ENCODE measurements at regions of chr2 and their contacts with region 1.

Region 1: DNA sequence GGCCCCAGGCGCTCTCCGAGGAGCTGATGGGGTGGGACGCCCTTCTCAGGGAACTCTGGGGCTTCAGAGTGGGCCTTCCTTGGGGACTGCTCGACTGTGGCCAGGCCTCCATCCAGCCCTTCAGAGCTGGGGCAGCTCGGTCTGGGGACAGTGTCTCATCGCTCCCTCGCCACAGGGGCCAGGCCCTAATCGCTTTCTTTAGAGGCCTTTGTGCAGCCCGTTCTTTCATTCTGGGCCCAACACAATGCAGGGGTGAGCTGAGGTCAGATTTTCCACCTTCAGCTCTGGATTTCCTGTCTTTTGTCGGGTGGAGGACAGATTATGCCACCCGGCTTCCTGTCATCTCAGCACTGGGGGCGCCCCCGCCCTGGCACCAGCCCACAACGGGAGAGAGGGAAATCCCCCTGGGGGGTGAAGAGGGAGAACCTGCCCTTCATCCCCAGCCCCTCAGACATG is 25.2 kb downstream of the MYCN start:
- DNase-seq: peak; percentile 85
- H3K4me3 Mint-ChIP-seq: peak overlapping the region; percentile 1
- H3K27ac Mint-ChIP-seq: peak overlapping the region; percentile 58
- H3K4me1 Mint-ChIP-seq: peaks cover 57% of the 10 kb centered on the region
- H3K27me3 Mint-ChIP-seq: peaks cover 2% of the 10 kb centered on the region

Region 2: GRCh38 chr2:15177103-15177502 is 788.5 kb before region 1 on chr2:
- CTCF ChIA-PET with region 1: no interaction called
- intact Hi-C with region 1: loop called (anchors 1 kb)
- DNase-seq: peak; percentile 85
- H3K4me3 Mint-ChIP-seq: no peak overlapping the region
- H3K27ac Mint-ChIP-seq: no peak overlapping the region
- H3K4me1 Mint-ChIP-seq: peaks cover 51% of the 10 kb centered on the region
- H3K27me3 Mint-ChIP-seq: peaks cover 19% of the 10 kb centered on the region

Region 3: GRCh38 chr2:15708865-15709820 is 256.4 kb before region 1 on chr2:
- CTCF ChIA-PET with region 1: no interaction called
- intact Hi-C with region 1: no loop called
- DNase-seq: no peak
- H3K4me3 Mint-ChIP-seq: no peak overlapping the region
- H3K27ac Mint-ChIP-seq: no peak overlapping the region
- H3K4me1 Mint-ChIP-seq: no peaks in the 10 kb centered on the region
- H3K27me3 Mint-ChIP-seq: peaks cover 2% of the 10 kb centered on the region

Region 4: DNA sequence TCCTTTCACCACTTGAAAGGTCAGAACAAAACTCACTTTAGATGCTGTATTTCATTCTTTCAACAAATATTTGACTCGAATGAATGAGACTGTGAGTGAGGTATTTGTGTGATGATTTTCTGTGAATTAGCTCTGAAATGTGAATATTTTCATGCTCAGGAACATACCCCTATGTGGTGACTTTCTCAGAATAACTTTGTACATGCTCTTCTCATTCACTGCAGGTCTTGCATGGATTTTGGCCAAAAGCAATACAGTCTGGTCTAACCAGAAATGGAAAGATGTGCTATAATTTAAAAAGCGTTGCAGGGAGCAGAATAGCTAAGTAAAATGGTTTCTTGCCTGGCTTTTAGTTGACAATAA is 50.3 kb after region 1 on chr2:
- CTCF ChIA-PET with region 1: no interaction called
- intact Hi-C with region 1: loop called (anchors 2 kb)
- DNase-seq: no peak
- H3K4me3 Mint-ChIP-seq: no peak overlapping the region
- H3K27ac Mint-ChIP-seq: no peak overlapping the region
- H3K4me1 Mint-ChIP-seq: peaks cover 8% of the 10 kb centered on the region
- H3K27me3 Mint-ChIP-seq: peaks cover 29% of the 10 kb centered on the region

Region 5: GRCh38 chr2:16625201-16625729 is 659.7 kb after region 1 on chr2:
- CTCF ChIA-PET with region 1: no interaction called
- intact Hi-C with region 1: loop called (anchors 2 kb)
- DNase-seq: no peak
- H3K4me3 Mint-ChIP-seq: no peak overlapping the region
- H3K27ac Mint-ChIP-seq: no peak overlapping the region
- H3K4me1 Mint-ChIP-seq: peaks cover 45% of the 10 kb centered on the region
- H3K27me3 Mint-ChIP-seq: no peaks in the 10 kb centered on the region

Region 6: GRCh38 chr2:16727256-16727655 is 761.7 kb after region 1 on chr2:
- CTCF ChIA-PET with region 1: no interaction called
- intact Hi-C with region 1: loop called (anchors 5 kb)
- DNase-seq: no peak
- H3K4me3 Mint-ChIP-seq: no peak overlapping the region
- H3K27ac Mint-ChIP-seq: no peak overlapping the region
- H3K4me1 Mint-ChIP-seq: peaks cover 27% of the 10 kb centered on the region
- H3K27me3 Mint-ChIP-seq: peaks cover 23% of the 10 kb centered on the region